ENCODE measurements at regions of chr14 and their contacts with region 1.

Region 1: DNA sequence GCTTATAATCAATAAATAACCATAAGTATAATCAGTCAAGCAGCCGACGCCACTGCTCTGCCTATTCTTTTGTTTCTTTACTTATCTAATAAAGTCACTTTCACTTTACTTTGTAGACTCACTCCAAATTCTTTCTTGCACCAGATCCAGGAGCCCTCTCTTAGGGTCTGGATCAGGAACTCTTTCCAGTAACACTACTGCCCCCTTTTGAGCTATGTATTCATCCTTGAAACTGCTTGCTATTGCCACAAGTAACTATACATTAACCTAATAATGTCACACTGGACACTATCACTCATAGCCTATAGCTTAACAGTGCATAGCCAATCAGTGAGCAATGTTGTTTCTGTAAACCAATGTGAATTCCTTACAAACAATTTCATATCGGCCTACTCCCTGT is 2.8 kb upstream of the NID2 start:
- DNase-seq: no peak
- ATAC-seq: no peak
- H3K4me3 ChIP-seq: no peak overlapping the region
- H3K27ac ChIP-seq: no peak overlapping the region
- H3K4me1 ChIP-seq: peaks cover 0 to 2% of the 10 kb centered on the region in 2 donors
- H3K27me3 ChIP-seq: no peaks in the 10 kb centered on the region

Region 2: DNA sequence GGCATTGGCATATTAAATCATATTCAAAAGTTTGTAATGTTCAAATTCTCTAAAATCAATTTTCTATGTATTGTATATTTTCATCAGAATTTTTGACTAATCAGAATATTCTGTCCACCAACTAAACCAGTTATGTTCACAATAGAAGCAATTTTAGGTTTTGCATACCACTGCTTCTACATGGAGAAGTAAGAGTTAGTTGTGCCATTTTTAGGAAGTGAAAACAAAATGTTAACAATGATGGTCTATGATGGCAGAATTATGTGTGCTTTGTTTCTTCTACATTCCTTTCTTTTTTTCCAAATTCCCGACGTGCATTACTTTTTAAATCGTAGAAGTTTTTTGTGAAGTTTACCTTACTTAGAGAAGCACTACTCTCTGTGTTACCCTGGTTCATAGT is 1170.3 kb before region 1 on chr14:
- intact Hi-C with region 1: no loop called
- DNase-seq: no peak
- ATAC-seq: no peak
- H3K4me3 ChIP-seq: no peak overlapping the region
- H3K27ac ChIP-seq: no peak overlapping the region
- H3K4me1 ChIP-seq: no peaks in the 10 kb centered on the region
- H3K27me3 ChIP-seq: no peaks in the 10 kb centered on the region

Region 3: GRCh38 chr14:51792819-51793218 is 278.9 kb before region 1 on chr14:
- intact Hi-C with region 1: no loop called
- DNase-seq: no peak
- ATAC-seq: no peak
- H3K4me3 ChIP-seq: no peak overlapping the region
- H3K27ac ChIP-seq: no peak overlapping the region
- H3K4me1 ChIP-seq: no peaks in the 10 kb centered on the region
- H3K27me3 ChIP-seq: no peaks in the 10 kb centered on the region

Region 4: DNA sequence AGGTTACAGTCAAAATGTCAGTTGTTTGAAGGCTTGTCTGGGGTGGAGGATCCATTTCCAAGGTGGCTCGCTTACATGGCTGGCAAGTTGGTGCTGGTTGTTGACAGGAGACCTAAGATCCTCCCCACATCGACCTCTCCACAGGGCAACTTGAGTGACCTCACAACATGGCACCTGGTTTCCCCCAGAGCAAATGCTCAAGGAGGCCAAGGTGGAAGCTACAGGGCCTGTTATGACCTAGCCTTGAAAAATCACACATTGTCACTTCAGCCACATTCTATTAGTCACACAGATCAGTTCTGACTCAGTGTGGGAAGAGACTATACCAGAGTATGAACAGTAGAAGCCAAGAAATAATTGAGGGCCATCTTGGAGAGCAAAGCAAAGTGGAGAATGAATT is 222.6 kb before region 1 on chr14:
- intact Hi-C with region 1: no loop called
- DNase-seq: no peak
- ATAC-seq: no peak
- H3K4me3 ChIP-seq: no peak overlapping the region
- H3K27ac ChIP-seq: no peak overlapping the region
- H3K4me1 ChIP-seq: no peaks in the 10 kb centered on the region
- H3K27me3 ChIP-seq: no peaks in the 10 kb centered on the region

Region 5: DNA sequence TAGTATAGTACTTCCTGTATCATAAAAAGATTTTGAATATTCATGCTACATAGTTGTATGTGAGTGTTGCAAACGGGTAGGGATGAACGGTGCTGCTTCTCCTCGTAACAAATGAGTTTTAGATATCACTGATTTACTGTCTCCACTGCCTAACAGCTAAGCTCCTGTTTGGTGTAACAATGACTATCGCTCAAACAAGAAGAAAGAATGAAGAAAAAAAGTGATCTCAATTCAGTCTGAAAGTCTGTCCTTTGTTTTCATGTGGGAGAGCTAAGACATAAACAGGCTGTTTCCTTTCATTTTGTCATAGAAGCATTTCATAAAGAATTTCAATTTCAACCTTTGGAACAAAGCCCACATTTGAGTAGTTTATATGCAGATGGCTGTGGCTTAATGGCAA is 108.4 kb before region 1 on chr14:
- intact Hi-C with region 1: no loop called
- DNase-seq: no peak
- ATAC-seq: no peak
- H3K4me3 ChIP-seq: no peak overlapping the region
- H3K27ac ChIP-seq: no peak overlapping the region
- H3K4me1 ChIP-seq: peaks cover 0 to 2% of the 10 kb centered on the region in 2 donors
- H3K27me3 ChIP-seq: no peaks in the 10 kb centered on the region

Region 6: GRCh38 chr14:52003324-52003723 is 68.4 kb before region 1 on chr14:
- intact Hi-C with region 1: loop called in 1 of 2 experiments (anchors 5 kb)
- DNase-seq: no peak
- ATAC-seq: no peak
- H3K4me3 ChIP-seq: no peak overlapping the region
- H3K27ac ChIP-seq: no peak overlapping the region
- H3K4me1 ChIP-seq: no peaks in the 10 kb centered on the region
- H3K27me3 ChIP-seq: no peaks in the 10 kb centered on the region

Region 7: GRCh38 chr14:52031781-52032180 is 39.9 kb before region 1 on chr14:
- intact Hi-C with region 1: loop called (anchors 5 kb)
- DNase-seq: peak; percentile 83 to 91
- ATAC-seq: peak; percentile 90
- H3K4me3 ChIP-seq: no peak overlapping the region
- H3K27ac ChIP-seq: no peak overlapping the region
- H3K4me1 ChIP-seq: peaks cover 0 to 3% of the 10 kb centered on the region in 2 donors
- H3K27me3 ChIP-seq: no peaks in the 10 kb centered on the region

Measured in aorta (tissue), 5 donors.